GM13976 (cell line): ENCODE measurements at regions of chr13 and their contacts with region 1.

Region 1: GRCh38 chr13:52809310-52809769 is 39.1 kb downstream of the PCDH8 start:
- DNase-seq: peak; percentile 79
- CTCF ChIP-seq: peak; percentile 65

Region 2: DNA sequence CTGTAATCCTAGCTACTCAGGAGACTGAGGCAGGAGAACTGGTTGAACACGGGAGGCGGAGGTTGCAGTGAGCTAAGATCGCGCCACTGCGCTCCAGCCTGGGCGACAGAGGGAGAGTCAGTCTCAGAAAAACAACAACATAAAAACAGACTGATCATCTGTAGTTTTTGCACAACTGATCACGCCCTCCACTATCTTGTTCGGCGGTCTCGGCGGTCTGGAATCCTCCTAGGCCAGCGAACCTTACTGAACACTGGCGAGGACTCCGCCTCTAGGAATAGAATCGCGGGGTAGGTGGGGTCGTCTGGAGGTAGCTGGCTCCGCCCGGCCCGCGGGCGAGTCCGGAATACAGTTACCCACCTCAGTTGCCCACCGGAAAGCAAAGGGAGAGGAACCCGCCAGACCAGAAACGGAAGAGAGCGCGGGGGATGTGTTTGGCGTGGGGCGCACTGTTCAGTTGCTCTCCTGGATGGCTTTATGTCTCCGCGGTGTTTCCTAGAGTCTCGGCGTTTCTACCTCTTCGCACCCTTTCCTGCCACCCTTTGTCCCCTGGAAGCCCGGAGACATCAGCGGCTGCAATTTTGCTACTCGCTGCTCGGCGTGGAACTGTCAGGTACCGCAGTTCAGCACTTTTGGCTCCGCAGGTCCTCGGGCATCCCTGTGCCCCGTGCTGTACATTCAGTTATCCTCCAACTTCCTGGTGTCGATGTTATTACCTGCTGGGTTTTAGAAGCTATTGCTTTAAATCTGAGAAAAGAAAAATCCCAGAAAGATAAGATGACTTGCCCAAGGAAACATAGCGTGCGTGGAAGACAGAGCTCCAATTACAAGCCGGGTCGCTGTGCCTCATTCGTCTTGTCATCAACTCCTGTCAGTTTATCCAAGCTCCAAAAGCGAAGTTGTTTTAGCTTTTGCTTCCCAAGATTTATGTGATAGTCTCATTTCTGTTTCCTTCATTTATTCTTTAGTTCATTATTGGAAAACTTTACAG is 192.0 kb before region 1 on chr13:
- in situ Hi-C with region 1: loop called (anchors 25 kb)
- DNase-seq: peak; percentile 87
- CTCF ChIP-seq: no peak